ENCODE measurements at regions of chr15 and their contacts with region 1.

Region 1: GRCh38 chr15:69457304-69458235 is 5.0 kb downstream of the RPLP1 start:
- DNase-seq: no peak
- H3K4me3 ChIP-seq: no peak overlapping the region
- H3K27ac ChIP-seq: peak overlapping the region; percentile 45
- H3K4me1 ChIP-seq: peaks cover 12% of the 10 kb centered on the region
- H3K27me3 ChIP-seq: no peaks in the 10 kb centered on the region
- CTCF ChIP-seq: no peak

Region 2: GRCh38 chr15:68602459-68603215 is 854.9 kb before region 1 on chr15:
- CTCF ChIA-PET with region 1: no interaction called
- POLR2A ChIA-PET with region 1: interaction called, 16 read pairs
- intact Hi-C with region 1: no loop called
- DNase-seq: no peak
- H3K4me3 ChIP-seq: no peak overlapping the region
- H3K27ac ChIP-seq: no peak overlapping the region
- H3K4me1 ChIP-seq: peaks cover 44% of the 10 kb centered on the region
- H3K27me3 ChIP-seq: no peaks in the 10 kb centered on the region
- CTCF ChIP-seq: no peak

Measured in A673 (cell line).